Adrenal gland (tissue), 19 donors: ENCODE measurements at regions of chr4 and their contacts with region 1.

Region 1: DNA sequence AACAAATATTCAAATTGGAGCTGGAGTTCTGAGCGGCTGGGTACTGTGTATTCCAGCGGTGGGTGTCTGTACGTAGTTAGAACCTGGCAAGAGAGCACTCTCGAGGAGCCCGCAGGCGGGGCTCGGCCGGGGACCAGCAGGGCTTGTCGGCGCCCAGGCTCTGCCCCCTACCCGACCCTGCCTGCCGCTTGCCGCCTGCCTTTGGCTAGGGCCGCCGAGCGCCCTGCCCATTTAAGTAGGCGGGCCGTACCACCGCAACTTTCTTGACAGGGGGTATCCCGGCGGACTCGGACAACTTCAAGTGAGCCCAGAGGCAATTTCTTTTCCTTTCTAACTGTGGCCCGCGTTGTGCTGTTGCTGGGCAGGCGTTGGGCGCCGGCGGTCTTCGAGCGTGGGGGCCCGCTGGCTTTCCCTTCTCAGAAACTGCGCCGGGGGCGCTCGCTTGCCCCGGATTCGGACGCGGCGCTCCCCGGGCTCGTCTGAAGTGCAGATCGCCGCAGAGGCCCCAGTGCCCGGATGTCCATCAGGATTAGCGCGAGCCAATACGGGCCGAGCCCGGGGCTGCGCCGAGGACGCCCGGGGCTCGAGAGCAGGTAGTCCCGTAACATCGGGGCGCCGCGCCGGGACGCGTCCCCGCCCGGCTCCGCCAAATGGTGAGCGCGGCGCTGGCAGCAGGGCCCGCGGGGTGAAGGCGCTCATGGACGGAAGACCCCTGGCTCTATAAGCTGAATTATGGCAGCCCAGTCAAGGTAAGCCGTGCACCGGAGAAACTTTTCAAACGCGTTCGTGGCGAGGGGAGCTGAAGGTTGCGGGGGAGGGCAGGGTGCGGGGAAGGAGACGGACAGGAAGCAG is 72.1 kb downstream of the AFF1 start:
- DNase-seq: peak; percentile 91 to 97 (median 94)
- H3K4me3 ChIP-seq: peak overlapping the region; percentile 28 to 99 (median 83)
- H3K27ac ChIP-seq: peak overlapping the region; percentile 91 to 98 (median 93)
- H3K4me1 ChIP-seq: peaks cover 24 to 48% of the 10 kb centered on the region in 2 donors
- H3K27me3 ChIP-seq: no peaks in the 10 kb centered on the region
- CTCF ChIP-seq: peak in 4 of 6 experiments; percentile 25 to 64 (median 41)
- POLR2A ChIP-seq: peak; percentile 97 to 98

Region 2: GRCh38 chr4:86934771-86935565 is 71.9 kb before region 1 on chr4 and contains the start of gene AFF1:
- intact Hi-C with region 1: loop called (anchors 5 to 10 kb)
- DNase-seq: peak; percentile 93 to 97 (median 95)
- H3K4me3 ChIP-seq: peak within 1 kb of the TSS; percentile 35 to 98 (median 93)
- H3K27ac ChIP-seq: peak within 1 kb of the TSS; percentile 91 to 100 (median 98)
- H3K4me1 ChIP-seq: peaks cover 28 to 46% of the 10 kb centered on the region in 2 donors
- H3K27me3 ChIP-seq: no peaks in the 10 kb centered on the region
- CTCF ChIP-seq: peak; percentile 29 to 72 (median 49)
- POLR2A ChIP-seq: peak; percentile 89 to 96
- total RNA-seq, gene AFF1: 21.0 to 109 (median 57.5) TPM

Region 3: GRCh38 chr4:87068583-87069021 is 61.7 kb after region 1 on chr4:
- intact Hi-C with region 1: no loop called
- DNase-seq: no peak
- H3K4me3 ChIP-seq: no peak overlapping the region
- H3K27ac ChIP-seq: no peak overlapping the region
- H3K4me1 ChIP-seq: peaks cover 19 to 49% of the 10 kb centered on the region in 2 donors
- H3K27me3 ChIP-seq: no peaks in the 10 kb centered on the region
- CTCF ChIP-seq: no peak
- POLR2A ChIP-seq: no peak

Region 4: DNA sequence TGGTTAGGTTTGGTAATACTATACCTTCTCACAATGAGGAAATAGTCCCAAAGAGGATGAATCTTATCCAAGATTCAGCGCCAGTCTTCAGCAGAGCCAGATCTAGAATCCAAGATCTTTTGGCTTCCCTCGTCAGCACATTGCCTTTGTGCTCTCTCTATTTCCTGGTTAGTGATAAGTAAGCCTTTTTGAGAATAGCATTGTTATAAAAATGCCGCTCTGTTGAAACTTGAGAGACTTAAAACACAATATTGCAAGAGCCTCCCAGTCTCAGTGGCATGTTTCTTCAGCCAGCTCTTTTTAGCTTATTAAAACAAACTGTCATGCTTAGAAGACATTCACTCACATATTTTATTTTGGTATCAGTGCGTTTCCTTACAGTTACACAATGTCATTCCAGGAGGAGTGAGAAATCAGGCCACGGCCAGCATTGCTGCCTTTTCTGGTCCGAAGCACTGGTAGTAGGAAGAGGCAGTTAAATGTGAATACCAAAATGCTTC is 72.1 kb after region 1 on chr4:
- intact Hi-C with region 1: loop called in 1 of 2 experiments (anchors 5 kb)
- DNase-seq: peak in 6 of 7 donors; percentile 49 to 84 (median 70)
- H3K4me3 ChIP-seq: no peak overlapping the region
- H3K27ac ChIP-seq: peak overlapping the region; percentile 17 to 77 (median 62)
- H3K4me1 ChIP-seq: peaks cover 26 to 73% of the 10 kb centered on the region in 2 donors
- H3K27me3 ChIP-seq: no peaks in the 10 kb centered on the region
- CTCF ChIP-seq: no peak
- POLR2A ChIP-seq: peak in 1 of 2 donors; percentile 31